ENCODE measurements at regions of chr2 and their contacts with region 1.

Region 1: GRCh38 chr2:134411828-134412638 is 158.2 kb downstream of the MGAT5 start:
- DNase-seq: peak; percentile 36 to 40
- ATAC-seq: peak; percentile 89 to 92
- H3K4me3 ChIP-seq: no peak overlapping the region
- H3K27ac ChIP-seq: no peak overlapping the region
- H3K4me1 ChIP-seq: peaks cover 6 to 9% of the 10 kb centered on the region in 2 donors
- H3K27me3 ChIP-seq: no peaks in the 10 kb centered on the region
- CTCF ChIP-seq: peak in 4 of 5 experiments; percentile 28 to 70 (median 56)
- POLR2A ChIP-seq: no peak

Region 2: GRCh38 chr2:133871545-133872209 is 540.4 kb before region 1 on chr2:
- in situ Hi-C with region 1: loop called in 1 of 4 experiments (anchors 25 kb)
- intact Hi-C with region 1: no loop called
- DNase-seq: no peak
- ATAC-seq: no peak
- H3K4me3 ChIP-seq: no peak overlapping the region
- H3K27ac ChIP-seq: no peak overlapping the region
- H3K4me1 ChIP-seq: no peaks in the 10 kb centered on the region
- H3K27me3 ChIP-seq: no peaks in the 10 kb centered on the region
- CTCF ChIP-seq: no peak
- POLR2A ChIP-seq: no peak

Region 3: GRCh38 chr2:133886735-133887660 is 525.0 kb before region 1 on chr2:
- in situ Hi-C with region 1: no loop called
- intact Hi-C with region 1: loop called (anchors 5 kb)
- DNase-seq: peak; percentile 29 to 35
- ATAC-seq: peak; percentile 69 to 76
- H3K4me3 ChIP-seq: no peak overlapping the region
- H3K27ac ChIP-seq: no peak overlapping the region
- H3K4me1 ChIP-seq: no peaks in the 10 kb centered on the region
- H3K27me3 ChIP-seq: no peaks in the 10 kb centered on the region
- CTCF ChIP-seq: peak in 2 of 5 experiments; percentile 52
- POLR2A ChIP-seq: no peak

Region 4: GRCh38 chr2:134245340-134245984 is 166.6 kb before region 1 on chr2:
- in situ Hi-C with region 1: loop called in 1 of 4 experiments (anchors 25 kb)
- intact Hi-C with region 1: loop called (anchors 2 kb)
- DNase-seq: peak; percentile 49 to 58
- ATAC-seq: peak; percentile 24 to 47
- H3K4me3 ChIP-seq: no peak overlapping the region
- H3K27ac ChIP-seq: no peak overlapping the region
- H3K4me1 ChIP-seq: peaks cover 2 to 6% of the 10 kb centered on the region in 2 donors
- H3K27me3 ChIP-seq: no peaks in the 10 kb centered on the region
- CTCF ChIP-seq: peak; percentile 40 to 73 (median 63)
- POLR2A ChIP-seq: no peak